Activated T-helper 2 cell treated with anti-CD3 and anti-CD28 coated beads, Interferon-gamma antibody, Interleukin-2, Interleukin-4, amounts not matched to agents 10 μg/mL and 5 μg/mL and 100 μg/mL, durations not matched to agents 14 hours and 24 hours and 36 hours (primary cell): ENCODE measurements at regions of chr22 and their contacts with region 1.

Region 1: DNA sequence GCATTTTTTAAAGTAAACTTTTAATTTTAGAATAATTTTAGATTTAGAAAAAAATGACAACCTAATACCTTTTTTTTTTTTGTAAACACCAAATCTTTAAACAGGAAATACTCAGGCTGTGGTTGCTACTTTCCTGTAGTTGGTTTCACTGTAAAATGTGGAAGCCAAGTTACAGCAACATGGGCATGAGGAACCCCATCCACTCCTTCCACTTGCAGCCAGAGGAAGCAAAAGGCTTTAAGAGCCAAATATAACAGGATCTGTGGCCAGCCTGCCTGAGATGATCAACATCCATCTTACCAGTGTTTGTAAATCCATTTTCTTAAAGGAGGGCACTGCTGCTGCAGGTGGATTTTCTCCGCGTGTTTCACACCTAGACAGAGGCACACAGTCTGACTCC is 66.2 kb downstream of the TNRC6B start:
- DNase-seq: no peak
- H3K4me3 Mint-ChIP-seq: peak overlapping the region; percentile 21
- H3K27ac Mint-ChIP-seq: peak overlapping the region; percentile 17
- H3K4me1 Mint-ChIP-seq: peaks cover 64% of the 10 kb centered on the region
- H3K27me3 Mint-ChIP-seq: no peaks in the 10 kb centered on the region

Region 2: GRCh38 chr22:40196628-40197360 is 47.1 kb before region 1 on chr22:
- intact Hi-C with region 1: loop called (anchors 5 kb)
- DNase-seq: no peak
- H3K4me3 Mint-ChIP-seq: no peak overlapping the region
- H3K27ac Mint-ChIP-seq: peak overlapping the region; percentile 78
- H3K4me1 Mint-ChIP-seq: peaks cover 38% of the 10 kb centered on the region
- H3K27me3 Mint-ChIP-seq: no peaks in the 10 kb centered on the region